ENCODE measurements at regions of chr6 and their contacts with region 1.

Region 1: DNA sequence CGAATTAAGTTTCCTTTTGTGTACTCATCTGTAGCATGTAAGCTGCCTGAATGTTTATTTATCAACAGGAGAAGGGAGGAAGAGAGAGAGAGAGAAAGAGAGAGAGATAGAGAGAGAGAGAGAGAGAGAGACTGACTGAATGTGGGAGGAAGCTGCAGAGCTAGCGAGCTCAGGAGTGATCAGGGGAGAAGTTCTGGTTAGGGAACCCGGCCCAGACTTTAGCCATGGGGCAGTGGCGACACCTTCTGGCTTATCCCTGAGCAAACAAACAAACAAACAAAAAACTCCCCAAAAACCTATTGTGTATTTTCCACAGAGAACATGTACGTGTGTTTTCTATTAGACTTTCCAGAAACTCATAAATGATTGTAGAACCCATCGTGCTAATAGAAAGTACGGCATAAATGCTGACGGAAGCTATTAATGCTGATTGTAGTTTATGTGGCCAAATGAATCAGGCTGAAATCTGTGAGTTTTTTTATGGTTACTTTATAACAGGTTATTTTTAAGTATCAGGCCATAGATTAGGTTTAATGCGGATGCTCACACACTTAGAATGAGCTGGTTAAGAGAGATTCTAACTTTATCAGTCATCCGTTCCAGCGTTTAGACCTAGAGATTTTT is 92.8 kb downstream of the CLIC5 start:
- DNase-seq: peak; percentile 77
- ATAC-seq: peak; percentile 20
- H3K4me3 Mint-ChIP-seq: no peak overlapping the region
- H3K27ac Mint-ChIP-seq: peak overlapping the region; percentile 55
- H3K4me1 Mint-ChIP-seq: peaks cover 46% of the 10 kb centered on the region
- H3K27me3 Mint-ChIP-seq: peaks cover 2% of the 10 kb centered on the region
- CTCF ChIP-seq: peak; percentile 82

Region 2: GRCh38 chr6:44593539-44593944 is 1329.3 kb before region 1 on chr6:
- CTCF ChIA-PET with region 1: interaction called, 13 read pairs
- POLR2A ChIA-PET with region 1: no interaction called
- intact Hi-C with region 1: no loop called
- DNase-seq: peak; percentile 89
- ATAC-seq: peak; percentile 90
- H3K4me3 Mint-ChIP-seq: no peak overlapping the region
- H3K27ac Mint-ChIP-seq: no peak overlapping the region
- H3K4me1 Mint-ChIP-seq: peaks cover 3% of the 10 kb centered on the region
- H3K27me3 Mint-ChIP-seq: peaks cover 4% of the 10 kb centered on the region
- CTCF ChIP-seq: peak; percentile 85

Region 3: DNA sequence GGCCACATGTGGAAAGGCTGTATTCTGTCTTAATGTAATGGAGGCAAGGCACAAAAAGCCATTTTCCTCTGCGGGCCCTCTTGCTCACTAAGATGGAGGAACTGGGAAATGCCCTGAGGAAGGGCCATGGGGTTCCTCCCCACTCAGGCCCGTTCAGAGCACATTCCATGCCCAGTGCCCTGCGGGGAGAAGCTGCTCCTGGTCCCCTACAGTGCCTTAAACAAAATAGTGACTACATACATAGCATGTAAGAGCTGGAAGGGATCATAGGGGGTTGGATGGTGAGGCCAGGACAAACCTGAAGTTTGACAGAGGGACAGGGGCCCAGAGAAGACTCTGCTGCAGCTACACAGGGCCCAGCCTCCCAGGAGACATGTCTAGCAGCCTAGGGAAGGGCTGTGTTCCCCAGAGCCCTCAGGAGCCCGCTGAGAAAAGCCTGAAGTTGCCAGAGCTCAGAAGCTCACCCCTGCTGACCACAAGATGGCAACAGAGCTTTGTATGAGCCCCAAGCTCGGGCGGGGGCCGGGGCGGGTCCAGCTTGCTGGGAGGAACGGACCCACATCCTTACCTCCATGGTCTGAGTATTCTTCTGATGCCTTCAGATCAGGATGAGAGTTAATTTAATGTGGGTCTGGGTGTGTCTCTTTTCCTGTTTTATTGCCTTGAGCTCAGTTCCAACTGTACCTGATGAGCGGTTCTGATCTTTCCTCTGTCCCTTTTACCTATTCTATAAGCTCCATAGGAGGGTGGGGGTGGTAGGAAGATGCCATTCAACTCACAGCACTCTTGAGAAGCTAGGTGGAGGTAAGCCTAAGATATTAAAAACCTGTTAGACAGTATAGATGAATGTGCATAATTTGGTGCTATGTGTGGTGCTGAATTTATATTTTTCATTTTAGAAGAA is 1292.5 kb before region 1 on chr6:
- CTCF ChIA-PET with region 1: interaction called, 10 read pairs
- POLR2A ChIA-PET with region 1: no interaction called
- intact Hi-C with region 1: no loop called
- DNase-seq: peak; percentile 50
- ATAC-seq: peak; percentile 56
- H3K4me3 Mint-ChIP-seq: no peak overlapping the region
- H3K27ac Mint-ChIP-seq: no peak overlapping the region
- H3K4me1 Mint-ChIP-seq: peaks cover 6% of the 10 kb centered on the region
- H3K27me3 Mint-ChIP-seq: no peaks in the 10 kb centered on the region
- CTCF ChIP-seq: peak; percentile 39

Region 4: GRCh38 chr6:45421709-45422502 is 500.9 kb before region 1 on chr6:
- CTCF ChIA-PET with region 1: interaction called, 8 read pairs
- POLR2A ChIA-PET with region 1: no interaction called
- intact Hi-C with region 1: loop called (anchors 5 kb)
- DNase-seq: peak; percentile 71
- ATAC-seq: peak; percentile 25
- H3K4me3 Mint-ChIP-seq: peak overlapping the region; percentile 94
- H3K27ac Mint-ChIP-seq: peak overlapping the region; percentile 95
- H3K4me1 Mint-ChIP-seq: peaks cover 29% of the 10 kb centered on the region
- H3K27me3 Mint-ChIP-seq: no peaks in the 10 kb centered on the region
- CTCF ChIP-seq: no peak

Region 5: DNA sequence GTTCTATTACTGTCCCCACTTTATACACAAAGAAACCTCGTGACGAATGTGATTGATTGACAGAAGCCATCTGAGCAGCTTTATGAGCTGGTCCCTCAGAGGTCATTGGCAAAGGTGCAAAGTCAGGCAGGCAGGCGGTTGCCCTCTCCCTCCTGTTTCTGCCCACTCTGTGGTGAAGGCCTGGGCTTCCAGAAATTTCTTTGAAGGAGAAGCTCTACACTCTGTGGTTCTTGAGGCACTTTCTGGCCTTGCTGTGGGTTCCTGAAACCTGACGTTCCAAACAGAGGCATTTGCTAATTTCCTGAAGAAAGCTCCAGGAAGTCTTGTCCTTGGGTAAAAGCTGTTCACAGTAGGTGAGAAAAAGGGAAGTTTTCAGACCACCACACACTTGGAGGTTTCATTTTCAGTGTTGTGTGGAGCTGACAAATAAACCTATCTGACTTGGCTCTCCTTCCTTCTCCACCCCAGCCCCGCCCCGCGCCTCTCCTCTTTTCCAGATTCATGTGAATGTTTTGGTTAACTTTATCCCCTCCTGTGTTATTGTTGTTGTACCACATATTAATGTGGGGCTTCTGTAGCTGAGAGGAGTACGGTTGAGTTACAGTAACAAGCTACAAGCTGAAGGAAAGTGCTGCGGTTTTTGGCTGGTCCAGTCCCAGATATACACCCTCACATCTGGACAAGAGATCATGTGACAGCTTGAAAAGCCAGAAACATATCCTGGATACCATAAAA is 181.2 kb before region 1 on chr6:
- CTCF ChIA-PET with region 1: interaction called, 17 read pairs
- POLR2A ChIA-PET with region 1: no interaction called
- intact Hi-C with region 1: loop called (anchors 5 kb)
- DNase-seq: peak; percentile 40
- ATAC-seq: peak; percentile 60
- H3K4me3 Mint-ChIP-seq: no peak overlapping the region
- H3K27ac Mint-ChIP-seq: peak overlapping the region; percentile 45
- H3K4me1 Mint-ChIP-seq: peaks cover 38% of the 10 kb centered on the region
- H3K27me3 Mint-ChIP-seq: no peaks in the 10 kb centered on the region
- CTCF ChIP-seq: no peak

Region 6: GRCh38 chr6:45801471-45802289 is 121.2 kb before region 1 on chr6:
- CTCF ChIA-PET with region 1: interaction called, 3 read pairs
- POLR2A ChIA-PET with region 1: no interaction called
- intact Hi-C with region 1: loop called (anchors 2 kb)
- DNase-seq: peak; percentile 85
- ATAC-seq: peak; percentile 88
- H3K4me3 Mint-ChIP-seq: no peak overlapping the region
- H3K27ac Mint-ChIP-seq: peak overlapping the region; percentile 66
- H3K4me1 Mint-ChIP-seq: peaks cover 20% of the 10 kb centered on the region
- H3K27me3 Mint-ChIP-seq: peaks cover 7% of the 10 kb centered on the region
- CTCF ChIP-seq: no peak

Region 7: DNA sequence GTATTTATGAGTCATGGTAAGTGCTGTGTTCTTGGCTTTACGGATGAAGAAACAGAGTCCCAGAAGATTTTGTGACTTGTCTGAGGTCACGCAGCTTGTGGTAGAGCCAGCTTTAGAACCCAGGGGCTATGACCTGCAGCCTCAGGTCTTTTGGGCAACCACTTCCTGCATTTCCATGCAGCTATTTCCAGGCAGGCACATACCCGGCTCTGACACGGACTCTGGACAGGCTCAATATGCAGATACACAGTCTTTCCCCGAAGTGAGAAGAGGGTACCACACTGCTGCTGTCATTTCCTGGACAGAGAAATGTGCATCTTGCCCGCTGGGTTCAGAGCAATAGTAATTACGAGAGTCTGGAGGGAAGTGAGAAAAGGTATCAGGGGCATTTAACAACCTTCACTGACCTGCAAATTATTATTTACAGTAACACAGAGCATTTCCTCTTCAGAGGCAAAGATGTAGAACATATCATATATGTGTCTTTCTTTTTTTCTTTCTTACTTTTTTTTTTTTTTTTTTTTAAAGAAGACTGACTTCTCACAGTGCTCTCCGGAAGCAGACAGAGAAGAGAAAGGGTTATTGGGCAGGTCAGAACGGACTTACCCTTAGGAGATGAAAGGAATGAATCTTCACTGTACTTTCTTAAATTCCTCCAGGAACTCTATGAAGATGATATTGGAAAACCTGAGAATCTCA is 92.2 kb before region 1 on chr6:
- CTCF ChIA-PET with region 1: interaction called, 3 read pairs
- POLR2A ChIA-PET with region 1: no interaction called
- intact Hi-C with region 1: loop called (anchors 5 kb)
- DNase-seq: peak; percentile 83
- ATAC-seq: peak; percentile 90
- H3K4me3 Mint-ChIP-seq: peak overlapping the region; percentile 65
- H3K27ac Mint-ChIP-seq: peak overlapping the region; percentile 77
- H3K4me1 Mint-ChIP-seq: peaks cover 36% of the 10 kb centered on the region
- H3K27me3 Mint-ChIP-seq: peaks cover 5% of the 10 kb centered on the region
- CTCF ChIP-seq: no peak

Region 8: DNA sequence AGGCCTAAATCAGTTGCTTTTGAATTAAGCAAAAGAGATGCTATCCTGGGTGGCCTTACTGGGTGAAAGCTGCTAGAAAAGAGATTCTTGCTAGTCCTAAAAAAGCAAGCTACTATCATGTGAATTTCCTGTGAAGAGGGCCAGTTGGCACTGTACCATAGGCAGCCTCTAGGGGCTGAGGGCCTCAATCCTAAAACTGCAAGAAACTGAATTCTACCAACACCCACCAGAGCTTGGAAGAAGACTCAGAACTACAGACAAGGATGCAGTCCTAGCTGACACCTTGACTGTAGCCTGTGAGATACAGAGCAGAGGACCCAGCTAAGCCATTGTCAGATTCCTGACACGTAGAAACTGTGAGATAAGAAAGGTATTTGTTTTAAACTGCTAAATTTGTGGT is 68.3 kb after region 1 on chr6:
- CTCF ChIA-PET with region 1: no interaction called
- POLR2A ChIA-PET with region 1: no interaction called
- intact Hi-C with region 1: no loop called
- DNase-seq: no peak
- ATAC-seq: peak; percentile 47
- H3K4me3 Mint-ChIP-seq: no peak overlapping the region
- H3K27ac Mint-ChIP-seq: no peak overlapping the region
- H3K4me1 Mint-ChIP-seq: peaks cover 3% of the 10 kb centered on the region
- H3K27me3 Mint-ChIP-seq: no peaks in the 10 kb centered on the region
- CTCF ChIP-seq: no peak

Measured in activated CD8-positive, alpha-beta T cell treated with anti-CD3 and anti-CD28 coated beads for 36 hours (primary cell).